Sciatic nerve (tissue), 2 donors: ENCODE measurements at regions of chr7 and their contacts with region 1.

Region 1: GRCh38 chr7:100623951-100624824 is 11.8 kb downstream of the MOSPD3 start:
- DNase-seq: no peak
- ATAC-seq: peak; percentile 49

Region 2: GRCh38 chr7:99438573-99439480 is 1185.4 kb before region 1 on chr7 and contains the starts of genes CPSF4 and PTCD1:
- intact Hi-C with region 1: no loop called
- DNase-seq: peak; percentile 97
- ATAC-seq: peak; percentile 95
- total RNA-seq, gene CPSF4: 38.0 TPM
- total RNA-seq, gene PTCD1: 4.4 TPM

Region 3: GRCh38 chr7:102101032-102101551 is 1476.9 kb after region 1 on chr7:
- intact Hi-C with region 1: loop called (anchors 5 kb)
- DNase-seq: no peak
- ATAC-seq: peak; percentile 15